B cell (primary cell): ENCODE measurements at regions of chr15 and their contacts with region 1.

Region 1: GRCh38 chr15:41416742-41417406 is at the start of gene RTF1:
- DNase-seq: peak; percentile 97
- ATAC-seq: peak; percentile 98
- H3K4me3 ChIP-seq: peak within 1 kb of the TSS; percentile 70 to 90 (median 86)
- H3K4me3 Mint-ChIP-seq: peak within 1 kb of the TSS; percentile 97
- H3K27ac ChIP-seq: peak within 1 kb of the TSS; percentile 55 to 83
- H3K27ac Mint-ChIP-seq: peak within 1 kb of the TSS; percentile 93
- H3K4me1 ChIP-seq: peaks cover 14 to 24% of the 10 kb centered on the region in 2 donors
- H3K4me1 Mint-ChIP-seq: peaks cover 37% of the 10 kb centered on the region
- H3K27me3 ChIP-seq: no peaks in the 10 kb centered on the region
- H3K27me3 Mint-ChIP-seq: no peaks in the 10 kb centered on the region
- CTCF ChIP-seq: no peak
- total RNA-seq, gene RTF1: 39.4 and 45.0 TPM in 2 replicates

Region 2: GRCh38 chr15:40847205-40847961 is 569.5 kb before region 1 on chr15:
- CTCF ChIA-PET with region 1: no interaction called
- POLR2A ChIA-PET with region 1: no interaction called
- intact Hi-C with region 1: no loop called
- DNase-seq: peak; percentile 61
- ATAC-seq: peak; percentile 48
- H3K4me3 ChIP-seq: no peak overlapping the region
- H3K4me3 Mint-ChIP-seq: peak overlapping the region; percentile 21
- H3K27ac ChIP-seq: peak overlapping the region; percentile 51 to 71
- H3K27ac Mint-ChIP-seq: peak overlapping the region; percentile 83
- H3K4me1 ChIP-seq: peaks cover 34 to 38% of the 10 kb centered on the region in 2 donors
- H3K4me1 Mint-ChIP-seq: peaks cover 37% of the 10 kb centered on the region
- H3K27me3 ChIP-seq: no peaks in the 10 kb centered on the region
- H3K27me3 Mint-ChIP-seq: no peaks in the 10 kb centered on the region
- CTCF ChIP-seq: no peak

Region 3: GRCh38 chr15:41116116-41116871 is 300.6 kb before region 1 on chr15 and contains the start of gene INO80:
- CTCF ChIA-PET with region 1: no interaction called
- POLR2A ChIA-PET with region 1: no interaction called
- intact Hi-C with region 1: loop called (anchors 1 kb)
- DNase-seq: peak; percentile 98
- ATAC-seq: peak; percentile 66
- H3K4me3 ChIP-seq: peak within 1 kb of the TSS; percentile 73 to 92 (median 80)
- H3K4me3 Mint-ChIP-seq: peak within 1 kb of the TSS; percentile 100
- H3K27ac ChIP-seq: peak within 1 kb of the TSS; percentile 93
- H3K27ac Mint-ChIP-seq: peak within 1 kb of the TSS; percentile 100
- H3K4me1 ChIP-seq: peaks cover 16 to 17% of the 10 kb centered on the region in 2 donors
- H3K4me1 Mint-ChIP-seq: peaks cover 26% of the 10 kb centered on the region
- H3K27me3 ChIP-seq: no peaks in the 10 kb centered on the region
- H3K27me3 Mint-ChIP-seq: no peaks in the 10 kb centered on the region
- CTCF ChIP-seq: no peak
- total RNA-seq, gene INO80: 55.7 and 57.8 TPM in 2 replicates

Region 4: GRCh38 chr15:41283653-41284426 is 133.0 kb before region 1 on chr15:
- CTCF ChIA-PET with region 1: no interaction called
- POLR2A ChIA-PET with region 1: no interaction called
- intact Hi-C with region 1: loop called (anchors 5 kb)
- DNase-seq: peak; percentile 99
- ATAC-seq: peak; percentile 98
- H3K4me3 ChIP-seq: peak overlapping the region; percentile 86 to 97 (median 94)
- H3K4me3 Mint-ChIP-seq: peak overlapping the region; percentile 95
- H3K27ac ChIP-seq: peak overlapping the region; percentile 86 to 90
- H3K27ac Mint-ChIP-seq: peak overlapping the region; percentile 97
- H3K4me1 ChIP-seq: peaks cover 16 to 33% of the 10 kb centered on the region in 2 donors
- H3K4me1 Mint-ChIP-seq: peaks cover 42% of the 10 kb centered on the region
- H3K27me3 ChIP-seq: no peaks in the 10 kb centered on the region
- H3K27me3 Mint-ChIP-seq: no peaks in the 10 kb centered on the region
- CTCF ChIP-seq: no peak

Region 5: GRCh38 chr15:41331833-41332787 is 84.8 kb before region 1 on chr15 and contains the start of gene OIP5:
- CTCF ChIA-PET with region 1: no interaction called
- POLR2A ChIA-PET with region 1: no interaction called
- intact Hi-C with region 1: loop called (anchors 2 kb)
- DNase-seq: peak; percentile 98
- ATAC-seq: peak; percentile 94
- H3K4me3 ChIP-seq: peak within 1 kb of the TSS; percentile 84 to 98 (median 89)
- H3K4me3 Mint-ChIP-seq: peak within 1 kb of the TSS; percentile 99
- H3K27ac ChIP-seq: peak within 1 kb of the TSS; percentile 45 to 76
- H3K27ac Mint-ChIP-seq: peak within 1 kb of the TSS; percentile 95
- H3K4me1 ChIP-seq: peaks cover 13 to 19% of the 10 kb centered on the region in 2 donors
- H3K4me1 Mint-ChIP-seq: peaks cover 27% of the 10 kb centered on the region
- H3K27me3 ChIP-seq: no peaks in the 10 kb centered on the region
- H3K27me3 Mint-ChIP-seq: no peaks in the 10 kb centered on the region
- CTCF ChIP-seq: peak; percentile 57
- total RNA-seq, gene OIP5: 0.84 and 2.3 TPM in 2 replicates

Region 6: GRCh38 chr15:41512940-41513510 is 96.2 kb after region 1 on chr15:
- CTCF ChIA-PET with region 1: no interaction called
- POLR2A ChIA-PET with region 1: no interaction called
- intact Hi-C with region 1: loop called (anchors 5 kb)
- DNase-seq: peak; percentile 76
- ATAC-seq: peak; percentile 73
- H3K4me3 ChIP-seq: peak overlapping the region; percentile 34 to 76 (median 51)
- H3K4me3 Mint-ChIP-seq: peak overlapping the region; percentile 88
- H3K27ac ChIP-seq: no peak overlapping the region
- H3K27ac Mint-ChIP-seq: peak overlapping the region; percentile 71
- H3K4me1 ChIP-seq: peaks cover 30% of the 10 kb centered on the region in 2 donors
- H3K4me1 Mint-ChIP-seq: peaks cover 27% of the 10 kb centered on the region
- H3K27me3 ChIP-seq: peaks cover 0 to 27% (median 11%) of the 10 kb centered on the region in 4 experiments
- H3K27me3 Mint-ChIP-seq: peaks cover 6% of the 10 kb centered on the region
- CTCF ChIP-seq: no peak

Region 7: GRCh38 chr15:41597787-41598186 is 180.9 kb after region 1 on chr15:
- CTCF ChIA-PET with region 1: no interaction called
- POLR2A ChIA-PET with region 1: no interaction called
- intact Hi-C with region 1: no loop called
- DNase-seq: no peak
- ATAC-seq: no peak
- H3K4me3 ChIP-seq: no peak overlapping the region
- H3K4me3 Mint-ChIP-seq: no peak overlapping the region
- H3K27ac ChIP-seq: no peak overlapping the region
- H3K27ac Mint-ChIP-seq: no peak overlapping the region
- H3K4me1 ChIP-seq: no peaks in the 10 kb centered on the region
- H3K4me1 Mint-ChIP-seq: no peaks in the 10 kb centered on the region
- H3K27me3 ChIP-seq: peaks cover 0 to 10% (median 0%) of the 10 kb centered on the region in 4 experiments
- H3K27me3 Mint-ChIP-seq: peaks cover 27% of the 10 kb centered on the region
- CTCF ChIP-seq: no peak

Region 8: DNA sequence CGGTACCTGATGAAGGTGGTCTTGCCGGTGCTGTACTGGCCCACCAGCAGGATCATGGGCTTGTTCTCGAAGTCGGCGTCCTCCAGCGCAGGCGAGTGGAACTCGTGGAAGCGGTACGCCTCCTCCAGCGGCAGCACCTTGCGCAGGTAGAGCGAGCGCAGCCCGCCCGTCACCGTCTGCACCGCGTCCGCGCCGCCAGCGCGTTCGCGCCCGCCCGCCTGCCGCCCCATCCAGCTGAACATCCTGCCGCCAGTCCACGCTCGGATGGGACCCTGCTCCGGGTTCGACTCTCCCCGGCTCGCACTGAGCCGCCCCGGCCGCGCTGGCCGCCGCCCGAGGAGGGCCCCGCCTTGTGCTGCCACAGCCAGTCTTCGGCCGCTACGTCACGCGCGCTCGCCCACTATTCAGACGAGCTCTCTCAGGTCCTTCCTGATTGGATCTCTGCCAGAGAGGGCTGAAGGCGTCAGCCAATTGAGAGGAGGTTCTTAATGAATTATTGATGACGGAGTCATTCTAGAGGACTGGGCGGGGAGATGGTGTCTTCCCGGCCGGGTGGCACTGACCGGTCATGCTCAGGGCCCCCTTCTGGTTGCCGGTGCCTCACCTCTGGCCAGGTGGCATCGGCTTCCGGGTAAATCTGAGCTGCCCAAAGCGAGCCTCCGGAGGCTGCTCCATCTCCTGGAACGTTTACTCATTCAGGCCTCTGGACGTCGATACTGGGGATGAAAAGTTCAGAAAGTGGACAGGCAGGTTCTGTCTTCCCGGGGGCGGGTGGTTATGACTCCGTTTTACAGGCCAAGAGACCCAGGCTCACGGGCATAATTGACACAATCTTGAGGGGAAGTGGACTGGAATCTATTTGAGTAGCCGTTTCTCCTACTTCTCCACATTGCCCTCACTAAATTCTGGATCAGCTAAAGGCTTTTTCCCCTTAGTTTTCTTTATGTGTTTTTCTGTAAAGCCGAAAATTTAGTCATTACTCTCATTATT is 555.7 kb after region 1 on chr15 and contains the start of gene EHD4:
- CTCF ChIA-PET with region 1: no interaction called
- POLR2A ChIA-PET with region 1: no interaction called
- intact Hi-C with region 1: loop called (anchors 5 kb)
- DNase-seq: peak; percentile 95
- ATAC-seq: peak; percentile 87
- H3K4me3 ChIP-seq: peak within 1 kb of the TSS; percentile 62 to 95 (median 83)
- H3K4me3 Mint-ChIP-seq: peak within 1 kb of the TSS; percentile 90
- H3K27ac ChIP-seq: peak within 1 kb of the TSS; percentile 71 to 84
- H3K27ac Mint-ChIP-seq: peak within 1 kb of the TSS; percentile 95
- H3K4me1 ChIP-seq: peaks cover 42 to 43% of the 10 kb centered on the region in 2 donors
- H3K4me1 Mint-ChIP-seq: peaks cover 47% of the 10 kb centered on the region
- H3K27me3 ChIP-seq: no peaks in the 10 kb centered on the region
- H3K27me3 Mint-ChIP-seq: peaks cover 16% of the 10 kb centered on the region
- CTCF ChIP-seq: no peak
- total RNA-seq, gene EHD4: 12.7 and 13.4 TPM in 2 replicates